ENCODE measurements at regions of chr17 and their contacts with region 1.

Region 1: DNA sequence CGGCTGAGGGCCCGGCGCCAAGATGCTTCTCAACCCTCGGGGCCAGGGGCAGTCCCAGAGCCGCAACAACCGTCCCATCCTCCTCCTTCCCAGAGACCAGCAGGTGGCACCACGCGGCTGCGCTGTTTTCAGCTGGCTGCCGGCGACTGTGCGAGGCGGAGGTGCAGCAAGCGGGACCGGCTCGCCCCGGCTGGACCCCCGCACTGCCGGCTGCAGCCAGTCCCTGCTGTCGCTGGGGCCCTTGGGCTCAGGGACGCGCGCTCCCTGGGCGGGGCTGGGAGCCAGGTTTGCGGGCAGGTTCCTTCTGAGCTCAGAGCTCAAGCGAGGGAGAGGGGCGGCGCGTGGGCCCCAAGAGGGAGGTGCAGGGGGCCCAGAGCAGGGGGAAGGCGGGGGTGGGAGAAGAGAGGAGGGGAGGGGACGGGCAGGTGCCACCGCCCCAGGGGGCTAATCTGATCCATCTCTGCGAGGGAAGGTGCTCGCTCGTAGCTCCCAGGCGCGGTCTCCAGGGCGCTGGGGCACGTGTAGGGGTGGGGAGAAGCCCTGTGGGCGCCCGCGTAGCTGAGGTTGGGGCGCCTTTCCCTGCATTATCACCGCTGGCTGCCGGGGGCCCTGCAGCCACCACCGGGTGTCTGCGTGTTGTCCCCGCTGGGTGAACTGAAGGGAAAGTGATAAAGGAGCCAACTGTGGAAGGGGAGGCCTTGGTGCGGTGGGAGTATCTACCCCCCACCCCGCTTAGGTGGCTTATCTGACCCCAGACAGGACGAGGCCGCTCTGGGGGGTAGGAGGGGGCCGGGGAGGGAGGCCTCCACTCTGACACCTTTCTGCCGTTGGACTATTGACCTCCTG is 24.2 kb downstream of the STAT5A start:
- DNase-seq: peak; percentile 94
- ATAC-seq: peak; percentile 70
- H3K4me3 Mint-ChIP-seq: peak overlapping the region; percentile 66
- H3K27ac Mint-ChIP-seq: peak overlapping the region; percentile 94
- H3K4me1 Mint-ChIP-seq: peaks cover 86% of the 10 kb centered on the region
- H3K27me3 Mint-ChIP-seq: no peaks in the 10 kb centered on the region
- CTCF ChIP-seq: peak; percentile 64

Region 2: GRCh38 chr17:42112552-42113176 is 199.8 kb before region 1 on chr17 and contains the start of gene DHX58:
- CTCF ChIA-PET with region 1: no interaction called
- POLR2A ChIA-PET with region 1: no interaction called
- intact Hi-C with region 1: no loop called
- DNase-seq: peak; percentile 89
- ATAC-seq: peak; percentile 82
- H3K4me3 Mint-ChIP-seq: peak within 1 kb of the TSS; percentile 79
- H3K27ac Mint-ChIP-seq: peak within 1 kb of the TSS; percentile 92
- H3K4me1 Mint-ChIP-seq: peaks cover 30% of the 10 kb centered on the region
- H3K27me3 Mint-ChIP-seq: no peaks in the 10 kb centered on the region
- CTCF ChIP-seq: no peak
- total RNA-seq, gene DHX58: 31.7 to 36.2 TPM

Region 3: GRCh38 chr17:42248351-42249179 is 63.9 kb before region 1 on chr17:
- CTCF ChIA-PET with region 1: interaction called, 9 read pairs
- POLR2A ChIA-PET with region 1: interaction called, 26 read pairs
- intact Hi-C with region 1: no loop called
- DNase-seq: peak; percentile 88
- ATAC-seq: peak; percentile 86
- H3K4me3 Mint-ChIP-seq: peak overlapping the region; percentile 77
- H3K27ac Mint-ChIP-seq: peak overlapping the region; percentile 98
- H3K4me1 Mint-ChIP-seq: peaks cover 69% of the 10 kb centered on the region
- H3K27me3 Mint-ChIP-seq: no peaks in the 10 kb centered on the region
- CTCF ChIP-seq: no peak

Region 4: DNA sequence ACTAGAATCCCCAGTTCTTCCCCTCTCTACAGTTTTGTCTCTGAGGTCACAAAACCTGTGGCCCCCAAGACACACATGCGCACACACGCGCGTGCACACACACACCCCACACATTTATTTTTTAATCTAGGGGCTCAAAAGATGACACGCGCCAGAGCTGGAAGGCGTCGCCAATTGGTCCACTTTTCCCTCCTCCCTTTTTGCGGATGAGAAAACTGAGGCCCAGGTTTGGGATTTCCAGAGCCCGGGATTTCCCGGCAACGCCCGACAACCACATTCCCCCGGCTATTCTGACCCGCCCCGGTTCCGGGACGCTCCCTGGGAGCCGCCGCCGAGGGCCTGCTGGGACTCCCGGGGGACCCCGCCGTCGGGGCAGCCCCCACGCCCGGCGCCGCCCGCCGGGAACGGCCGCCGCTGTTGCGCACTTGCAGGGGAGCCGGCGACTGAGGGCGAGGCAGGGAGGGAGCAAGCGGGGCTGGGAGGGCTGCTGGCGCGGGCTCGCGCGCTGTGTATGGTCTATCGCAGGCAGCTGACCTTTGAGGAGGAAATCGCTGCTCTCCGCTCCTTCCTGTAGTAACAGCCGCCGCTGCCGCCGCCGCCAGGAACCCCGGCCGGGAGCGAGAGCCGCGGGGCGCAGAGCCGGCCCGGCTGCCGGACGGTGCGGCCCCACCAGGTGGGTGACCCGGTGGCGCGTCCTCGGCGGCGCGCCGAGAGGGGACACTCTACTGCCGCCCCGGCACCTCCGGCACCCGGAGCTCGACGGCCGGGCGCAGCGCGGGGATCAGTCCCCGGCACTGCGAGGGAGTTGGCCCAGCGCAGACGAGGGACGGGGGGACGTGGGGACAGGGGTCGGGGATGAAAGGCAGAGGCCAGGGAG is 24.3 kb before region 1 on chr17 and contains the start of gene STAT5A:
- CTCF ChIA-PET with region 1: interaction called, 5 read pairs
- POLR2A ChIA-PET with region 1: interaction called, 136 read pairs
- intact Hi-C with region 1: loop called (anchors 2 kb)
- DNase-seq: peak; percentile 90
- ATAC-seq: peak; percentile 76
- H3K4me3 Mint-ChIP-seq: peak within 1 kb of the TSS; percentile 84
- H3K27ac Mint-ChIP-seq: peak within 1 kb of the TSS; percentile 94
- H3K4me1 Mint-ChIP-seq: peaks cover 54% of the 10 kb centered on the region
- H3K27me3 Mint-ChIP-seq: no peaks in the 10 kb centered on the region
- CTCF ChIP-seq: no peak
- total RNA-seq, gene STAT5A: 163 to 190 TPM

Region 5: DNA sequence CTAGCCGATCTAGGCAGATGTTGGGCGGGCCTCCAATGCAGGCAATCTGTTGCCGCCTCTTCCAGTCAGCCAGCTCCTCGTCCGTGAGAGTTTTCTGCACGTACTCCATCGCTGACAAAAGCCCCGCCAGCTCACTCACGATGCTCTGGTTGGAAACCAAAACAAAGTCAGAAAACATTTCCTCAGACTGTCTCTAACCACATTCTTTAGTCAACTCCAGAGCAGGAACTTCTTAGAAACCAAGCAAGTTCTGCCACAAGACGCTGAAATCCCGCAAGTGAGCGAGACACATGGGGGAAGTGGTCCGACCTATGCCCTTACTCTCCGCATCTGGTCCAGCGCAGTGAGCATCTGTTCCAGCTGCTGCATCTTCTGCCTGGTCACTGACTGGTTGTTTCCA is 24.9 kb after region 1 on chr17:
- CTCF ChIA-PET with region 1: interaction called, 9 read pairs
- POLR2A ChIA-PET with region 1: interaction called, 16 read pairs
- intact Hi-C with region 1: no loop called
- DNase-seq: peak; percentile 92
- ATAC-seq: peak; percentile 62
- H3K4me3 Mint-ChIP-seq: peak overlapping the region; percentile 56
- H3K27ac Mint-ChIP-seq: peak overlapping the region; percentile 89
- H3K4me1 Mint-ChIP-seq: peaks cover 77% of the 10 kb centered on the region
- H3K27me3 Mint-ChIP-seq: no peaks in the 10 kb centered on the region
- CTCF ChIP-seq: no peak

Region 6: DNA sequence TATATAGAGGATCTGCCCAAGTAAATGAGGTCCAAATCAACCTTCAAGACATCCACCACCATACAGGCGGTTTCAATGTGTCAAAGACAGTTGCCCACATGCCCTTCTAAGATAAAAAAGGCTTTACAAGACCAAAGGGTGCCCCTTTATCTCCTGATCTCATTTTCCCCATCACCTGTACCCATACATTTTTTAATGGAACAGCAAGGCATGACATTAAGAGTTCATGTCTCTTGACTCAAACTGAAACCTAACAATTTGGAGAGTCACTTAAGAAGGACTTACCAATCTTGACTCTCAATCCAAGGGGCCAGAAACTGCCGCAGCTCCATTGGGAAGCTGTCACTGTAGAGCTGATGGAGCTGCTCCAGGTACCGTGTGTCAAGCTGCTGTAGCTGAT is 35.6 kb after region 1 on chr17:
- CTCF ChIA-PET with region 1: no interaction called
- POLR2A ChIA-PET with region 1: no interaction called
- intact Hi-C with region 1: no loop called
- DNase-seq: no peak
- ATAC-seq: peak; percentile 7
- H3K4me3 Mint-ChIP-seq: no peak overlapping the region
- H3K27ac Mint-ChIP-seq: peak overlapping the region; percentile 17
- H3K4me1 Mint-ChIP-seq: peaks cover 46% of the 10 kb centered on the region
- H3K27me3 Mint-ChIP-seq: no peaks in the 10 kb centered on the region
- CTCF ChIP-seq: no peak

Region 7: DNA sequence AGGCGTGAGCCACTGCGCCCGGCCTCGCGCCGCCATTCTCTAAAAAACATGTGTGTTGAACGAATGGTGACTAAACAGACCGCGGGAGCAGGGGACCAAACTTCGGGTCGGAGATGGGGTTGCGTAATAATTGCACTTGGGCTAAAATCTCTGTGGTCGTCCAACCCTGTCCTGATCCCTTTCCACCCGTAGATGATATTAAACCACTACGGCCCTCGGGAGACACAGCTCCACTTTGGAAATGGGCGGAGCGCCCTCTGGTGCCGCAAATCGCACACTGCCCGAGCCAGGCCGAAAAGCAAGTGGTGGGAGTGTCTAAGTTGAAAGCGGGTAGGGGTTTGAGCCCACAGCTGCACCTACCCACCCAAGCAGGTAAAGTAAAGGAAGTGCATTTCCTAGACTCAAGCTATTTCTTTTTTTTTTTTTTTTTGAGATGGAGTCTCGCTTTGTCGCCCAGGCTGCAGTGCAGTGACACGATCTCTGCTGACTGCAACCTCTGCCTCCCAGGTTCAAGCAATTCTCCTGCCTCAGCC is 93.5 kb after region 1 on chr17:
- CTCF ChIA-PET with region 1: interaction called, 968 read pairs
- POLR2A ChIA-PET with region 1: interaction called, 39 read pairs
- intact Hi-C with region 1: no loop called
- DNase-seq: peak; percentile 89
- ATAC-seq: peak; percentile 77
- H3K4me3 Mint-ChIP-seq: no peak overlapping the region
- H3K27ac Mint-ChIP-seq: no peak overlapping the region
- H3K4me1 Mint-ChIP-seq: peaks cover 24% of the 10 kb centered on the region
- H3K27me3 Mint-ChIP-seq: no peaks in the 10 kb centered on the region
- CTCF ChIP-seq: peak; percentile 94

Measured in activated CD8-positive, alpha-beta T cell treated with anti-CD3 and anti-CD28 coated beads for 36 hours (primary cell).